Activated CD4-positive, alpha-beta memory T cell treated with anti-CD3 and anti-CD28 coated beads for 36 hours (primary cell): ENCODE measurements at regions of chr1 and their contacts with region 1.

Region 1: GRCh38 chr1:84442256-84442655 is 36.8 kb upstream of the RPF1 start:
- DNase-seq: no peak
- H3K4me3 Mint-ChIP-seq: peak overlapping the region; percentile 0
- H3K27ac Mint-ChIP-seq: no peak overlapping the region
- H3K4me1 Mint-ChIP-seq: peaks cover 19% of the 10 kb centered on the region
- H3K27me3 Mint-ChIP-seq: peaks cover 2% of the 10 kb centered on the region

Region 2: DNA sequence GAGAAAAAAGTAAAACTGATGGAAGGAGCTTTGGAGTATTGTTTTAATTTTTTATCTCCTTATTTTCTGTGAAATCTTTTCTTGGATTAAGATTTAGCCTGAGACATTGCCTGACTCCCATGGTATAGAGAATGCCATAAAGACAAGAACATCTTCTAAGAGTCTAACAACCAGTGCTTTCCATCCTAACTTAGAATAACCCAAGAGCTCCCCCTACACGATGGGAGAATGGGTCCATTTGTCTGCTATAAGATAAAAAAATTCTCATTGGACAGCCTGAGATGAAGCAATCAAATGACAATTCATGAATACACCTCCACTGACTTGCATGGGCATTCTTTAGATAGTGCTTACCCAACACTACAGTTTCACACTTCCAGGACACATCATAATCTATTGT is 921.5 kb before region 1 on chr1:
- CTCF ChIA-PET with region 1: no interaction called
- POLR2A ChIA-PET with region 1: no interaction called
- intact Hi-C with region 1: no loop called
- DNase-seq: no peak
- H3K4me3 Mint-ChIP-seq: no peak overlapping the region
- H3K27ac Mint-ChIP-seq: no peak overlapping the region
- H3K4me1 Mint-ChIP-seq: peaks cover 4% of the 10 kb centered on the region
- H3K27me3 Mint-ChIP-seq: no peaks in the 10 kb centered on the region

Region 3: GRCh38 chr1:84254703-84255238 is 187.5 kb before region 1 on chr1:
- CTCF ChIA-PET with region 1: no interaction called
- POLR2A ChIA-PET with region 1: no interaction called
- intact Hi-C with region 1: no loop called
- DNase-seq: no peak
- H3K4me3 Mint-ChIP-seq: no peak overlapping the region
- H3K27ac Mint-ChIP-seq: no peak overlapping the region
- H3K4me1 Mint-ChIP-seq: no peaks in the 10 kb centered on the region
- H3K27me3 Mint-ChIP-seq: no peaks in the 10 kb centered on the region

Region 4: DNA sequence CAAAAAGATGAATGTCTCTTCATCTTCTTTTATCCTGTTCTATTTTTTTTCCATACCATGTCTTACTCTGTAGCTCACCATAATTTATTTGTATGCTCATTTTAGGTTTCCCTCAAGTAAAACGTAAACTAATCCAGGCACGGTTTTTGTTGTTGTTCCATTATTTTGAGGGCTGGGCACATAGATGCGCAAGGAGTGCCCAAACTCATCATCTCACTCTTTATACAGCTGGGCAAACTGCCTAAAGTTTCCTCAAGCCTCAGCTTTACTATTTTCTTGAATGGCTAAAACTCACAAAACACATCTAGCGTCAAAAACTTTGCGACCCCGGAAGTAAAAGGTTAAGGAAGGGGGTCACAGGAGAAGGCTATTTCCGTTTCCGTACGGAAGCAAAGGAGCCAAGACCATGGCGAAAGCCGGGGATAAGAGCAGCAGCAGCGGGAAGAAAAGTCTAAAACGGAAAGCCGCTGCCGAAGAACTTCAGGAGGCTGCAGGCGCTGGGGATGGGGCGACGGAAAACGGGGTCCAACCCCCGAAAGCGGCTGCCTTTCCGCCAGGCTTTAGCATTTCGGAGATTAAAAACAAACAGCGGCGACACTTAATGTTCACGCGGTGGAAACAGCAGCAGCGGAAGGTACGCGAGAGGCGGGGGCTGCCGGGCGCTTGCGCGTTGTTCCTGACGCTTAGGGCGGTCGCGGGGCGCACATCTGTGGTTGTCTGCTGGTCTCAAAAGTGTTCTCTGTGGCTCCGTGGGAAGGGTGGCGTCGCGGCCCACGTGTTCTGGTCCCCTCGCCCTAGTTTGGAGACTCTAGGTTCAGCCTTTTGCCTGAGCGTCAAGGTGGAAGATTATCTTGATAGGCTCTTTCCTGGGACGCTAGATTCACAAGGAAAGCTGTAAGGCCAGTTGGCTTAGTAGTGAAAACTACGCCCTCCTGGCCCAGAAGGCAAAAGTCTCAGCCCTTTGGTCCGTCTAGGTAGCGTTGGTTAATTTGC is 36.9 kb after region 1 on chr1 and contains the start of gene RPF1:
- CTCF ChIA-PET with region 1: interaction called, 21 read pairs
- POLR2A ChIA-PET with region 1: interaction called, 3 read pairs
- intact Hi-C with region 1: loop called (anchors 1 kb)
- DNase-seq: peak; percentile 82
- H3K4me3 Mint-ChIP-seq: peak within 1 kb of the TSS; percentile 96
- H3K27ac Mint-ChIP-seq: peak within 1 kb of the TSS; percentile 96
- H3K4me1 Mint-ChIP-seq: peaks cover 34% of the 10 kb centered on the region
- H3K27me3 Mint-ChIP-seq: peaks cover 16% of the 10 kb centered on the region
- total RNA-seq, gene RPF1: 55.0 to 56.5 TPM

Region 5: GRCh38 chr1:84541679-84542078 is 99.4 kb after region 1 on chr1:
- CTCF ChIA-PET with region 1: no interaction called
- POLR2A ChIA-PET with region 1: no interaction called
- intact Hi-C with region 1: loop called (anchors 2 kb)
- DNase-seq: no peak
- H3K4me3 Mint-ChIP-seq: no peak overlapping the region
- H3K27ac Mint-ChIP-seq: no peak overlapping the region
- H3K4me1 Mint-ChIP-seq: peaks cover 5% of the 10 kb centered on the region
- H3K27me3 Mint-ChIP-seq: no peaks in the 10 kb centered on the region

Region 6: DNA sequence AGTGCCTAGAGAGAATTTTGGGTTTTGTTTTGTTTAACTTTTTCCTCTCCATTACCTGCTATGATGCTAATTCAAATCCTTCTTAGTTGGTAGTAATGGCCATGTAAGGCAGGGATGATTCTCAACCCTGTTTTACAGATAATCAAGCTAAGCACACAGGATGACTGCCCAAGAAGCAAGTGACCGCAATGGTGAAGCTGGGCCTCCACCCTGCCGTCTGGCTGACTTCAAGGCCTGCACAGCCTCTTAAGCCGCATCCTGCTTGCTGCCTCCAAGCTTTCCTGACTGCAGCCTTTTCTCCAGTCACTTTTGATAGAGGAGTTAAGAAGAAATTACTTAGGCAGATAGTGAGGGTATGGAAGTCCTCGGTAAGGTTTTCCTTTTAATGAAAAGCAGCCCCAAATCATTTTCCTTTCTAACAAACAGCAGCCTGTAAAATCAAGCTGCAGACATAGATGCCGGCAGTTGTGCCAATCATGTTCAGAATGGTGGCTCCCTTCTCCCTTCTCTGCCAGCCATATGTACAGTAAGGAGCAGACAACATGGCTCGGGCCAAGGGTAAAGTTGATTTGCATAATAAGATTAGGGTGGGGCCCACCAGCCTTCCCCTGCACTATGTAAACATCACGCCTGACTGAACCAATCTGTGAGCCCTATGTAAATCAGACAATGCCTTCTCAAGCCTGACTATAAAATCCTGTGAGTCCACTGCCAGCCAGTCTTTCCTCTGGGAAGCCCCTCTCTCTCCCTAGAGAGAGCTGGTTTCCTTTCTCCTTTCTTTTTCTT is 140.7 kb after region 1 on chr1:
- CTCF ChIA-PET with region 1: no interaction called
- POLR2A ChIA-PET with region 1: no interaction called
- intact Hi-C with region 1: no loop called
- DNase-seq: no peak
- H3K4me3 Mint-ChIP-seq: no peak overlapping the region
- H3K27ac Mint-ChIP-seq: no peak overlapping the region
- H3K4me1 Mint-ChIP-seq: no peaks in the 10 kb centered on the region
- H3K27me3 Mint-ChIP-seq: peaks cover 5% of the 10 kb centered on the region

Region 7: GRCh38 chr1:84724128-84724860 is 282.0 kb after region 1 on chr1:
- CTCF ChIA-PET with region 1: interaction called, 12 read pairs
- POLR2A ChIA-PET with region 1: no interaction called
- intact Hi-C with region 1: loop called (anchors 1 kb)
- DNase-seq: peak; percentile 71
- H3K4me3 Mint-ChIP-seq: no peak overlapping the region
- H3K27ac Mint-ChIP-seq: no peak overlapping the region
- H3K4me1 Mint-ChIP-seq: peaks cover 14% of the 10 kb centered on the region
- H3K27me3 Mint-ChIP-seq: no peaks in the 10 kb centered on the region

Region 8: GRCh38 chr1:84772428-84772943 is 330.2 kb after region 1 on chr1:
- CTCF ChIA-PET with region 1: interaction called, 7 read pairs
- POLR2A ChIA-PET with region 1: no interaction called
- intact Hi-C with region 1: loop called (anchors 1 kb)
- DNase-seq: peak; percentile 83
- H3K4me3 Mint-ChIP-seq: no peak overlapping the region
- H3K27ac Mint-ChIP-seq: no peak overlapping the region
- H3K4me1 Mint-ChIP-seq: no peaks in the 10 kb centered on the region
- H3K27me3 Mint-ChIP-seq: no peaks in the 10 kb centered on the region